ENCODE measurements at regions of chr2 and their contacts with region 1.

Region 1: GRCh38 chr2:112836695-112837117 is at the start of gene IL1B:
- DNase-seq: peak; percentile 92
- H3K4me3 ChIP-seq: peak within 1 kb of the TSS; percentile 44 to 57 (median 44)
- H3K27ac ChIP-seq: peak within 1 kb of the TSS; percentile 88
- H3K4me1 ChIP-seq: peaks cover 56% of the 10 kb centered on the region
- H3K27me3 ChIP-seq: no peaks in the 10 kb centered on the region
- CTCF ChIP-seq: no peak
- total RNA-seq, gene IL1B: 5.0 to 219 TPM

Region 2: DNA sequence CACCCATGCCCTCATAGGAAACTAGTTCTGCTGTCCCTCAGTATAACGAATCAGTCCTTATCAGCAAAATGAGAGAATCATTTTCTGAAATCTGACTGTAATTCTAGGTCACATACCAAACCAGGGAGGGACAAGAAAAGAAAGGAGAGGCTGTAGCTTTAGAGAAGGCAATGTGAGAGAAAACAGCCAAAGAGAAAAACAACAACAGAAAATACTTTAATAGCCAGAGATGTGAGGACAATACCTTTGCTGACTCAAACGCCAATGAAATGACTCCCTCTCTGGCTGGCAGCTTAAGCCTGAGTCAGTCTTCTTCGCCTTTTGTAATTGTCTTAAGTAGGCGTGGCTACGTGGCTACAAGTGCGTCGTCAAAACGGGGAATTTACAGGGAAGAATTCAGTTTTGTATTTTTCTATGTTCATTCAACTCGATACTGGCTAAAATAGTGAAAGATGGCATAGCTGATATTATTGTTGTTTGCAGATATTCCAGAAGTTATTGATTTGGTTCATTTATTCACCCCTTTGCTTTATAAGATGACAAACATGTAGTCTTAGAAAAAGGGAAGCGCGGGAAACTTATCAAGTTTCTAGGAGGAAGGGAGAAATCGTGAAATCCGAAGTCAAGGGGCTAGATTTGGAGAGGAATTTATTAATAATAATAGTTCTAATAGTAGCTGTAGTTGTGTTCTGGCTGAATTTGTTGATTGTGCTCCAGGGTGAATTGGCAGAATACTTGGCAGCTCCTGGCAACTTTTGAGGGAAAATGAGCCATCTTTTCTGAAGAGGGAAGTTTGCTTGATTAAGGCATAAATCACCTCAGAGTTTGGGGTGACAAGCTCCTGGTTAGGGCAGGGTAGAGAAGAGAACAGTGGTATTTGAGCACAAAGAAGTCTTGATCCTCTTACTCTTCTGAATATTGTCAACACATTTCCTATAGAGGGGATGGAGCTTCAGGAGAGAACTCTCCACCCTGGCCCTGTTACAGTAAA is 52.2 kb before region 1 on chr2 and contains the start of gene IL1A:
- CTCF ChIA-PET with region 1: no interaction called
- dilution Hi-C with region 1: no loop called
- in situ Hi-C with region 1: no loop called
- intact Hi-C with region 1: loop called (anchors 1 kb)
- DNase-seq: peak; percentile 93
- H3K4me3 ChIP-seq: peak within 1 kb of the TSS; percentile 51 to 55 (median 54)
- H3K27ac ChIP-seq: peak within 1 kb of the TSS; percentile 92
- H3K4me1 ChIP-seq: peaks cover 24% of the 10 kb centered on the region
- H3K27me3 ChIP-seq: no peaks in the 10 kb centered on the region
- CTCF ChIP-seq: no peak
- total RNA-seq, gene IL1A: 17.5 to 184 TPM

Region 3: GRCh38 chr2:112803691-112804521 is 32.8 kb before region 1 on chr2:
- CTCF ChIA-PET with region 1: no interaction called
- dilution Hi-C with region 1: no loop called
- in situ Hi-C with region 1: no loop called
- intact Hi-C with region 1: no loop called
- DNase-seq: peak; percentile 93
- H3K4me3 ChIP-seq: no peak overlapping the region
- H3K27ac ChIP-seq: peak overlapping the region; percentile 99
- H3K4me1 ChIP-seq: peaks cover 36% of the 10 kb centered on the region
- H3K27me3 ChIP-seq: no peaks in the 10 kb centered on the region
- CTCF ChIP-seq: no peak

Region 4: DNA sequence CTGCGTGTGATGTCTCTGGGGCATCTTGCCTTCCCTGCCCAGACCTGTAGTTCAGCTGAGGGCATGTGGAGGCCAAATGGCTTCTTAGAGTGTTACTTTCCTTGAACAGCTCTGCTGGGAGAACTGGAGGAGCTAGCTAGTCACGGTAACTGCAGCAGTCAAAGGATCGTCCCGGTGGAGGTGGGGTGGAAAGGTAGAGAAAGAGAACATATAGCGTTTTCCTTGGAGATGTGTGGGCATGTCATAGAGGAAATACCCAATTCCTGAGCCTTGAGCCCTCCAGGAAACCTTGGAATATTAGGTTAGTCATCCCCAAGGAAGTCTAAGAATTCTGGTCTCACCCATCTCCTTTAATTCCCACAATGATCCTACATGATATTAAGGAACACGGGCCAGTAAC is 40.7 kb after region 1 on chr2:
- CTCF ChIA-PET with region 1: interaction called, 3 read pairs
- dilution Hi-C with region 1: loop called (anchors 5 kb)
- in situ Hi-C with region 1: no loop called
- intact Hi-C with region 1: loop called (anchors 1 kb)
- DNase-seq: peak; percentile 94
- H3K4me3 ChIP-seq: no peak overlapping the region
- H3K27ac ChIP-seq: peak overlapping the region; percentile 97
- H3K4me1 ChIP-seq: peaks cover 72% of the 10 kb centered on the region
- H3K27me3 ChIP-seq: no peaks in the 10 kb centered on the region
- CTCF ChIP-seq: no peak

Region 5: DNA sequence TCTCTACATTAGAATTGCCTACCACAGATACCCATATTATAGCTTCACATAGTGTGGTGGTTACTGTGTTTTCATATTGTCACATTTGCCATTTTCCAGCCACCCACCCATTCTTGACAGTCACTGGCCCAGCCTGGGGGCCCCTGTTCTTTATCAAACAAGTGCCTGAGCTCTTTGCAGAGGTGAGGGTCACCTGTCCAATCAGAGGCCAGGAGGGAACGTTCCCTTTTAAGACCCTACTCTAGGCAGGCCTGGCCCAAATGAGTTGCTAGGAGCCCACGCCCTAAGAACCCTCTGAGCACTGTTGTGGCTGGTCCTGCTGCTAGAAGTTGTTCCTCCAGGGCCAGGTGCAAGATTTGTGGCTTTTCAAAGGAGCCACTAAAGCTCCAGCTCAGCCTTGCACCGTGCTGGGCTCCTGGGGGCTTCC is 79.5 kb after region 1 on chr2:
- CTCF ChIA-PET with region 1: no interaction called
- dilution Hi-C with region 1: loop called (anchors 5 kb)
- in situ Hi-C with region 1: no loop called
- intact Hi-C with region 1: no loop called
- DNase-seq: no peak
- H3K4me3 ChIP-seq: no peak overlapping the region
- H3K27ac ChIP-seq: no peak overlapping the region
- H3K4me1 ChIP-seq: peaks cover 6% of the 10 kb centered on the region
- H3K27me3 ChIP-seq: no peaks in the 10 kb centered on the region
- CTCF ChIP-seq: no peak

Measured in mammary epithelial cell (primary cell).